ENCODE measurements at regions of chr4 and their contacts with region 1.

Region 1: DNA sequence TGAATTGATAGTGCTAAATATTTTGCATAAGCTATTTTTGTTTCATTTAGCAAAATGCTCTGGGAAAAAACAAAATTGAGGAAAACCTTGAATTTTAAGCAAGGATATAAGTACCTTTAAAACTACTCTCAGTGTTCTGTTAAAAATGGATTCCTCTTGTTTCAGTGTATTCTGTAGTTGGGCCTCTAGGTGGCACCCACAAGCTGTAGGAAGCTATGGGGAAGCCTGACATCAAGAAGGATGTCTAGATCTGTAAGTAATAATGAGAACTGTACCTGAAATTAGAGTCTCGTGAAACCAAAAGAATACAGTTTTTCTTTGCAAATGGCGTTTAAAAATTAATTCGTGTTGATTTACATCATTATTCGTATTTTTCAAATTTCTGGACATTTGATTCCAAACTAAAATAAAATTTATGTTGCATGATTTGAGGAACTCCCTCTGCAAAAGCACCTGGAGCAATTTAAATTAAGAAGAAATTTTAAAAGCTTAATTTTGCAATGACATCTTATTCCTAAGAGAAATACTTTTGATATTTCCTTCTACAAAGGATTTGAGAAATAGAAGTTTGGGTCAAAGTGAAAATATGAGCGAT is 51.2 kb downstream of the TMPRSS11E start:
- DNase-seq: peak; percentile 35
- H3K4me3 Mint-ChIP-seq: no peak overlapping the region
- H3K27ac Mint-ChIP-seq: no peak overlapping the region
- H3K4me1 Mint-ChIP-seq: no peaks in the 10 kb centered on the region
- H3K27me3 Mint-ChIP-seq: peaks cover 1% of the 10 kb centered on the region

Region 2: GRCh38 chr4:68433582-68433981 is 64.9 kb before region 1 on chr4:
- intact Hi-C with region 1: no loop called
- DNase-seq: no peak
- H3K4me3 Mint-ChIP-seq: no peak overlapping the region
- H3K27ac Mint-ChIP-seq: no peak overlapping the region
- H3K4me1 Mint-ChIP-seq: peaks cover 11% of the 10 kb centered on the region
- H3K27me3 Mint-ChIP-seq: no peaks in the 10 kb centered on the region

Region 3: GRCh38 chr4:68745472-68745812 is 246.9 kb after region 1 on chr4:
- intact Hi-C with region 1: no loop called
- DNase-seq: no peak
- H3K4me3 Mint-ChIP-seq: no peak overlapping the region
- H3K27ac Mint-ChIP-seq: no peak overlapping the region
- H3K4me1 Mint-ChIP-seq: no peaks in the 10 kb centered on the region
- H3K27me3 Mint-ChIP-seq: no peaks in the 10 kb centered on the region

Region 4: DNA sequence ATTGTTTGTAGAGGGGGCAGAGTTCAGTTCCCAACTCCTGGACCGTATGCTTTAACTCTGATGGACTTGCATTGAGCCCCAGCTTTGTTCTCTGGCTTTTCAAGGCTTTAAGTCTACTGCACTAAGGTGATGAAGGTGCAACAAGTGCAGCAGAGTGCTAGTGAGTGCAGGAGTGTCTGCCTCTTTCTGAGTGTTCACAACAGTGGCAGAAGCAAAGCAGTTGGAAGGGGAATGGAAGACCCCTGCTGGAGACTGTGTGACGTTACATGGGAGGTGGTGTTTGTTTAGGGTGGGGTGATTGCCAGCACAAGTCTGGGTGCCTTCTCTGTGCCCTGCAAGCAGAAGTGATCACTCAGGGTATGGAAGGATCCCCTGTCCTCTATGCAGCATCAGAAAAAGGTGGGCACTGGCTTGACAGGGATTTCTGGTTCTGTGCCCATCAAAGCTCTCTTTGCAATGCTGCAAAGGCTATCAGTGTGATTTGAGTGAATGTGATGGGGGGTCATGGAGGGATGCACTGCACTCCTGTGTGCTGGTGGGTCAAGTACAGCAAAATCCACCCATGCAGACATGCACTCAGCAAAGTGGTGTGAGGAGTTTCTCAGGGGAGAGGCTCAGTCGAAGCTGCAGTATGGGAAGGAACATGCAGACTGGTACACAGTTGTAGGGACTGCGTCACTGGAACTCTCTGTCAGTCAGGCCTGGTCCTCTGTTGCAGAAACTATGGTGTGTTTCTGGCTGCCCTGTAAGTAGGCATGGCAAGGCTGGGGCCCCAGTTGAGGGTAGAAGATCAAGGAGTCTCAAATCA is 526.9 kb after region 1 on chr4:
- intact Hi-C with region 1: loop called (anchors 10 kb)
- DNase-seq: no peak
- H3K4me3 Mint-ChIP-seq: no peak overlapping the region
- H3K27ac Mint-ChIP-seq: no peak overlapping the region
- H3K4me1 Mint-ChIP-seq: no peaks in the 10 kb centered on the region
- H3K27me3 Mint-ChIP-seq: no peaks in the 10 kb centered on the region

Measured in activated T-helper 1 cell treated with anti-CD3 and anti-CD28 coated beads, Interleukin-12 subunit alpha, Interleukin-12 subunit beta, Interleukin-2, Interleukin-4 antibody, amounts not matched to agents 30 ng/mL and 10 ng/mL and 1 ng/mL, durations not matched to agents 14 hours and 24 hours and 36 hours (primary cell).